ENCODE measurements at regions of chr2 and their contacts with region 1.

Region 1: DNA sequence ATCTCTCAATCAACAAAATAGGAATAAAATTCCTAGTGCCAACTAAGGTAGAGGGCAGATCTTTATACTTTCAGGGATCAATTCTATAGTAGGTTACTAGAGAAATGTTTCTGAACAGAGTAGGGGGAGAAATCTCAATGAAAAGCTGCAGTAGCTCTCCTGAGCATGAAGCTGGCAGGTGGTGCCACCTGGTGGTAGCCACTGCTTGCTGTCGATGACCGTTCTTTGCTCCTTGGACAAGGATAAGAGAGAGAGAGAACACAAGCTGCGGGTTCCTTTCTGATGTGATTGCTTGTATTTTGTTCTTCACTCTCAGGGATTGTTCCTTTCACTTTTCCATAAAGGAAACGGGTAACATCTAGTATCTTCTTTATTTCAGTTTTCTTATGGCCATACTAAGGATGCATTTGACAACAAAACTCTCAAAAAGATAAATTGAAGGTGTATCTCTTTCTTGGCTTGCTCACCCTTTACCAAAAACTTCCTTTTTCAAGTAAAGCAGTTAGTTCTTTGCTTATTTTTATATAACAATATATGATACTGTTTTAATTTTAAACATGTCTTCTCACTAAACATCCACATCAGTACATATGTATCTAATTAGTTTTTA is 18.6 kb upstream of the MRPL19 start:
- DNase-seq: no peak
- H3K4me3 ChIP-seq: no peak overlapping the region
- H3K27ac ChIP-seq: no peak overlapping the region
- H3K27me3 ChIP-seq: peaks cover 8% of the 10 kb centered on the region
- CTCF ChIP-seq: peak; percentile 99

Region 2: GRCh38 chr2:75459565-75460310 is 168.3 kb before region 1 on chr2:
- CTCF ChIA-PET with region 1: interaction called, 106 read pairs
- POLR2A ChIA-PET with region 1: no interaction called
- DNase-seq: peak; percentile 65
- H3K4me3 ChIP-seq: no peak overlapping the region
- H3K27ac ChIP-seq: no peak overlapping the region
- H3K27me3 ChIP-seq: peaks cover 7% of the 10 kb centered on the region
- CTCF ChIP-seq: no peak

Region 3: GRCh38 chr2:75654012-75654411 is 26.0 kb after region 1 on chr2:
- CTCF ChIA-PET with region 1: interaction called, 11 read pairs
- POLR2A ChIA-PET with region 1: no interaction called
- DNase-seq: no peak
- H3K4me3 ChIP-seq: no peak overlapping the region
- H3K27ac ChIP-seq: no peak overlapping the region
- H3K27me3 ChIP-seq: no peaks in the 10 kb centered on the region
- CTCF ChIP-seq: no peak

Region 4: DNA sequence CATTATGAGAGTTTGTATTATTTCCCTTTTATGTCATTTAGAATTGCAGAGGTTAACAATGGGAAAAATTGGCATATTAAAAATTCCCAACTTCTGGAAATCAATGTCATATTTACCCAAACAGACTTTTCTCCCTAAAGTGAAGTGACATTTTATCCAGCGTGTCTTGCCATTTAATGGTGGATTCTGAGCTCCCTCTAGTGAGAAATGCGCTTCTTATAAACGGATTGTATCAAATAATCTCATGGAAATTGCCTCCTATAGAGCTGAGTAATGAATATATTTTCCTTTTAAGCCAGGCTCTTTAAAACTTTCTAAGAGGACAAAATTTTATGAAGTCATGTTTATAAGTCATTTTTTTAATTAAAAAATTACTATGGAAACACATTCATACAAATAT is 88.4 kb after region 1 on chr2:
- CTCF ChIA-PET with region 1: no interaction called
- POLR2A ChIA-PET with region 1: no interaction called
- DNase-seq: no peak
- H3K4me3 ChIP-seq: no peak overlapping the region
- H3K27ac ChIP-seq: no peak overlapping the region
- H3K27me3 ChIP-seq: no peaks in the 10 kb centered on the region
- CTCF ChIP-seq: no peak

Measured in AG04450 (cell line).